ENCODE measurements at regions of chr17 and their contacts with region 1.

Region 1: GRCh38 chr17:65100316-65101140 is 36.6 kb upstream of the RGS9 start:
- DNase-seq: peak; percentile 84
- ATAC-seq: peak; percentile 94
- H3K4me3 Mint-ChIP-seq: peak overlapping the region; percentile 72
- H3K27ac Mint-ChIP-seq: peak overlapping the region; percentile 81
- H3K4me1 Mint-ChIP-seq: peaks cover 18% of the 10 kb centered on the region
- H3K27me3 Mint-ChIP-seq: peaks cover 7% of the 10 kb centered on the region

Region 2: DNA sequence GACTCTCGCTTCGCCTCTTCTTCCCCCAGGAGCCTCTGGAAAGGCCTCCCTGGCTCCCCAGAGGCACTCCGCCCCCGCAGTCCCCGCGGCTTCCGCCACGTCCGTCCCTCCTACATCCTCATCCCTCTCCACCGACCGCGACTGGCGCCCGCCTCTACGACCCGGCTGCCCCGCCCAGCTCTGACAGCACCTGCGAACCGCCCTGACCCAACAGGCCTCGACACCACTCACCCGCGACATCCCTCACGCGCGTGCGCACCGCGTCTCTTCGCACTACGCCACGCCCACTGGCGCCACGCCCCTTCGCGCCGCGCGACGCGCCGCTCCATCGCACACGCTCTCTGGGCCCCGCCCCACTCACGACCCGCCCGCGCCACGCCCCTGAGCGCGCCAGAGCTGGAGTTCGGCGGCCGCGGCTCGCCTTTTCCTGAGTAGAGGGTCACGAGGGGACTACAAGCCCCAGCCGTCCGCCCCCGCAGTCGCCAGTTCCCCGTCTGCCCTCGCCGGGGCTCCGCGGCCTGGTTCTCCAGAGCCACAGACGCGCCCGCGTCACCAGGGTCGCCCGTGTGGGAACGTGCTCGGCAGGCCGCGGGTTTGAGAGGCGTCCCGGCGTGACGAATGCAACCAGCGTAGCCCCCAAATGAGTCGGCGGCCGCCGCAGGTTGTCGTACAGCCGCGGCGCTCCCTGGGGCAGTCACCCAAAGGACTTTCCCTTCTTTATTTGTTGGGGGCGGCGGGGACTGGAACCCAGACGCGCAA is 125.0 kb before region 1 on chr17:
- CTCF ChIA-PET with region 1: interaction called, 15 read pairs
- POLR2A ChIA-PET with region 1: no interaction called
- DNase-seq: peak; percentile 97
- ATAC-seq: peak; percentile 90
- H3K4me3 Mint-ChIP-seq: peak overlapping the region; percentile 85
- H3K27ac Mint-ChIP-seq: peak overlapping the region; percentile 98
- H3K4me1 Mint-ChIP-seq: peaks cover 49% of the 10 kb centered on the region
- H3K27me3 Mint-ChIP-seq: no peaks in the 10 kb centered on the region

Region 3: GRCh38 chr17:64998436-64999190 is 101.9 kb before region 1 on chr17:
- CTCF ChIA-PET with region 1: no interaction called
- POLR2A ChIA-PET with region 1: no interaction called
- DNase-seq: no peak
- ATAC-seq: no peak
- H3K4me3 Mint-ChIP-seq: no peak overlapping the region
- H3K27ac Mint-ChIP-seq: no peak overlapping the region
- H3K4me1 Mint-ChIP-seq: no peaks in the 10 kb centered on the region
- H3K27me3 Mint-ChIP-seq: no peaks in the 10 kb centered on the region

Region 4: DNA sequence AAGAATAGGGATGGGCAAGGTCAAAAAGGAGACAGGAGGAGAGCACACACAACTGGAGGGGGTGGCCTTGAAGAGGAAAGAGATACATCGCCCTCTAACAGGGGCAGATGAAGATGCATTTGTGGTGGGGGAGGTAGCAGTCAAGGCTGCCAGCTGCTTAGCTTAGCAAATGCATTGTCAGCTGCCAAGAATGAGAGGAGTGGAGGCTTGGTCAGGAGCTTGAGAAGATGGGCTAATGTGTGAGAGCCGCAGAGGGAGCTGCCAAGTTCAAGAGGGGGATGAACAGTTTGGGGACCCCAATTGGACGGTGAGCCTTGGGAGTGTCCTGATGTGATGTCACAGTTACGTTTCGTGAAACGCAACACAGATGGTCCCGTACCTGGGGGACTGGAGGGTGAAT is 15.1 kb before region 1 on chr17:
- CTCF ChIA-PET with region 1: interaction called, 28 read pairs
- POLR2A ChIA-PET with region 1: interaction called, 3 read pairs
- DNase-seq: no peak
- ATAC-seq: no peak
- H3K4me3 Mint-ChIP-seq: no peak overlapping the region
- H3K27ac Mint-ChIP-seq: no peak overlapping the region
- H3K4me1 Mint-ChIP-seq: no peaks in the 10 kb centered on the region
- H3K27me3 Mint-ChIP-seq: peaks cover 16% of the 10 kb centered on the region

Region 5: DNA sequence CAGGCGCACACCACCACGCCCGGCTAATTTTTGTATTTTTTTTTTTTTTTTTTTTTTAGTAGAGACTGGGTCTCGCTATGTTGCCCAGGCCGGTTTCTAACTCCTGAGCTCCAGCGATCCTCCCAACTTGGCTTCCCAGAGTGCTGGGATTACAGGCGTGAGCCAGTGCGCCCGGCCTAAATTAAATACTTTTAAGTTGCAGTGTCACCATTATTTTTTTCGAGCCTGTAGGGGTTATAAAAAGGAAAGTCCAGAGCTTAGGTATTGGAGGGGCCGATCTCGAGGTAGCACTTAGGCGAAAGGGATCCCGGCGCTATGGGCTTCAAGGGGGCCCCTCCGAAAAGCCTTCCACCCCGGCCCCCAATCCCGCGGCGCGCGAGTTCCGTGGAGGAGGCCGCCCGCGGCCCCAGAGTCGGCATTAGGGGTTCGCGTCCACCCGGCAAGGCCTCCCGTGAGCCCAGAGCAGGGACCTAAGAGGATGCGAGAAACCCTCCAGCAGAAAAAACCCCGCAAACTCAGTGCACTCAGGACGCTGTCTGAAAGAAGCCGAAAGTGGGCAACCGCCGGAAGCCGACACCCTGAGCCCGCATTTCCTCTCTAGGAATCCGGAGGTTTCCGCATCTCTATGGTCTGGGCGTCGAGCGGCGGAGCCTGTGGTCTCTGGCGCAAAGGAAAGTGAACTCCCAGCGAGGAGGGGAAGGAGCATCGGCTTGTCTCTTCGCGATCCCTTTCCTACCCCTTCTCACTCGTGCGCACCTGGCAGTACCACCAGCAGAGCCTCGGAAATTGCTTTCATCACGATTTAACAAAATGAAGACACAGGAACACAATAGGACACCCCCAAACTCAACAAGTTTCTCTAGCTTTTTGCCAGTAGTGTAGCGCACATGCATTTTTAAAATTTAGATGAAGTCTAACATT is 22.6 kb after region 1 on chr17:
- CTCF ChIA-PET with region 1: interaction called, 23 read pairs
- POLR2A ChIA-PET with region 1: interaction called, 3 read pairs
- DNase-seq: peak; percentile 90
- ATAC-seq: peak; percentile 82
- H3K4me3 Mint-ChIP-seq: peak overlapping the region; percentile 78
- H3K27ac Mint-ChIP-seq: peak overlapping the region; percentile 90
- H3K4me1 Mint-ChIP-seq: peaks cover 23% of the 10 kb centered on the region
- H3K27me3 Mint-ChIP-seq: peaks cover 9% of the 10 kb centered on the region

Region 6: DNA sequence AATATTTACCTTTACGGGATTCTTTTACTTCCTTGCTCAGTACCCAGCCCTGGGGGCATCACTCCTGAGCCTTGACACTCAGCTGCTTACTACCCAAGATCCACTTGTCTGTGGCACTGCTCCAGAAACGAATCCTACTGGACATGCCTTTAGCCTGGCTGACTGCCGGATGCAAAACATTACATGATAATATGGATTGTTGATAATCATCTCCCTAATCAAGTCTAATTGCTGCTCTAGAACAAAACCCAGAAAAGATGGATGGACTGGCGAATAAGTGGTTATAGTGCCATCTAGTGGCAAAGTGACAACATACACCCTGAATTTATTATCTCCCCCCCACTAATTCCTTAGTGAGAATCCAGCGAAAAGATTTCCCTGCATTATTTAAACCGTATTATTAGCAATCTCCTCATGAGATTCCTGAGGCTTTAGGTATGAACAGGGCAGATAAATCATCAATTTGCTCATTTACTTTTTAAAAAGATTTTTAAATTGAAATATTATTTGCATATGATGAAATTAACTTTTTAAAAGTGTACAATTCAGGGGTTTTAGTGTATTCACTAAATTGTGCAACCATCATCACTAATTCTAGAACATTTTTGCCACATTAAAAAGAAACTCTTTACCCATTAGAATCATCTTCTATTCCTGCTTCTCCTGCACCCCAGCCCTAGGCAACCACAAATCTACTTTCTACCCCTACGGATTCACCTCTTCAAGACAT is 98.3 kb after region 1 on chr17:
- CTCF ChIA-PET with region 1: interaction called, 21 read pairs
- POLR2A ChIA-PET with region 1: no interaction called
- DNase-seq: no peak
- ATAC-seq: peak; percentile 70
- H3K4me3 Mint-ChIP-seq: no peak overlapping the region
- H3K27ac Mint-ChIP-seq: no peak overlapping the region
- H3K4me1 Mint-ChIP-seq: peaks cover 6% of the 10 kb centered on the region
- H3K27me3 Mint-ChIP-seq: peaks cover 4% of the 10 kb centered on the region

Region 7: GRCh38 chr17:65294179-65294720 is 193.7 kb after region 1 on chr17:
- CTCF ChIA-PET with region 1: no interaction called
- POLR2A ChIA-PET with region 1: no interaction called
- DNase-seq: peak; percentile 73
- ATAC-seq: peak; percentile 89
- H3K4me3 Mint-ChIP-seq: no peak overlapping the region
- H3K27ac Mint-ChIP-seq: no peak overlapping the region
- H3K4me1 Mint-ChIP-seq: peaks cover 14% of the 10 kb centered on the region
- H3K27me3 Mint-ChIP-seq: peaks cover 7% of the 10 kb centered on the region

Measured in activated CD8-positive, alpha-beta T cell treated with anti-CD3 and anti-CD28 coated beads, Interleukin-2, amount 10 ng/mL, durations not matched to agents 7 days and 5 days (primary cell).